Transverse colon (tissue), 4 donors: ENCODE measurements at regions of chr5 and their contacts with region 1.

Region 1: GRCh38 chr5:68170826-68171558 is 44.6 kb upstream of the PIK3R1 start:
- DNase-seq: peak; percentile 60
- H3K4me3 ChIP-seq: no peak overlapping the region
- H3K27ac ChIP-seq: peak overlapping the region; percentile 69 to 81 (median 75)
- H3K4me1 ChIP-seq: peaks cover 0 to 26% (median 0%) of the 10 kb centered on the region in 4 donors
- H3K27me3 ChIP-seq: no peaks in the 10 kb centered on the region
- CTCF ChIP-seq: no peak
- EP300 ChIP-seq: peak; percentile 96
- POLR2A ChIP-seq: no peak

Region 2: GRCh38 chr5:67795781-67796477 is 375.1 kb before region 1 on chr5:
- in situ Hi-C with region 1: no loop called
- intact Hi-C with region 1: no loop called
- DNase-seq: no peak
- H3K4me3 ChIP-seq: no peak overlapping the region
- H3K27ac ChIP-seq: no peak overlapping the region
- H3K4me1 ChIP-seq: peaks cover 0 to 4% (median 0%) of the 10 kb centered on the region in 4 donors
- H3K27me3 ChIP-seq: no peaks in the 10 kb centered on the region
- CTCF ChIP-seq: no peak
- EP300 ChIP-seq: no peak
- POLR2A ChIP-seq: no peak

Region 3: GRCh38 chr5:68137511-68138140 is 33.4 kb before region 1 on chr5:
- in situ Hi-C with region 1: no loop called
- intact Hi-C with region 1: no loop called
- DNase-seq: no peak
- H3K4me3 ChIP-seq: no peak overlapping the region
- H3K27ac ChIP-seq: no peak overlapping the region
- H3K4me1 ChIP-seq: peaks cover 0 to 15% (median 3%) of the 10 kb centered on the region in 4 donors
- H3K27me3 ChIP-seq: no peaks in the 10 kb centered on the region
- CTCF ChIP-seq: no peak
- EP300 ChIP-seq: no peak
- POLR2A ChIP-seq: no peak

Region 4: GRCh38 chr5:68252673-68253623 is 82.0 kb after region 1 on chr5:
- in situ Hi-C with region 1: no loop called
- intact Hi-C with region 1: loop called (anchors 2 kb)
- DNase-seq: peak; percentile 60
- H3K4me3 ChIP-seq: no peak overlapping the region
- H3K27ac ChIP-seq: peak overlapping the region; percentile 65 to 77 (median 71)
- H3K4me1 ChIP-seq: peaks cover 34 to 97% (median 77%) of the 10 kb centered on the region in 4 donors
- H3K27me3 ChIP-seq: no peaks in the 10 kb centered on the region
- CTCF ChIP-seq: peak; percentile 57 to 84 (median 67)
- EP300 ChIP-seq: no peak
- POLR2A ChIP-seq: no peak